Ovary (tissue), 10 donors: ENCODE measurements at regions of chr7 and their contacts with region 1.

Region 1: GRCh38 chr7:26853788-26854393 is 10.5 kb downstream of the SKAP2 start:
- DNase-seq: no peak
- H3K4me3 ChIP-seq: no peak overlapping the region
- H3K27ac ChIP-seq: no peak overlapping the region
- H3K4me1 ChIP-seq: peaks cover 6% of the 10 kb centered on the region
- H3K27me3 ChIP-seq: no peaks in the 10 kb centered on the region
- CTCF ChIP-seq: peak in 2 of 3 donors; percentile 16 to 61
- EP300 ChIP-seq: no peak
- POLR2A ChIP-seq: no peak

Region 2: DNA sequence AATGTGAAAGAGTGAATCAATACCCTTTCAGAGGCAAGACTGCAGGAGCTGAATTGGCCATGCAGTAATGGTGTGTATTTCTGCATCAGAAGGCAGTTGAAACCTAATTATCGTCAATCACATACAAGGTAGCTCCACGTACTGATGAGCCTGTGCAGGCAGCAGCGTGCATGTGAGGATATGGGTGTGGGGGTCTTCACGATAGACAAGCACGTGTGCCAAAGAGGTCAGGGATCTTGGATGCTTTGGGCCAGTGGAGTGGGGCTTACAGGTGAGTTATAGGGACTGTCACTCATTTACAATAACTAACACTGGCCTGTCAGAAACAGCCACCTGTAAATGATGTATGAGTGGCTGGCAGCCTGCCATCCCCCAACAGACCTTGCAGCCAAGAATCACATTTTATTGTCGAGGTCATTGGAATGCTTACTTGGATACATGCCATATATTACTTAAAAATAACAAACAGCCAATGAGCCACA is 200.4 kb before region 1 on chr7:
- intact Hi-C with region 1: no loop called
- DNase-seq: no peak
- H3K4me3 ChIP-seq: no peak overlapping the region
- H3K27ac ChIP-seq: no peak overlapping the region
- H3K4me1 ChIP-seq: no peaks in the 10 kb centered on the region
- H3K27me3 ChIP-seq: no peaks in the 10 kb centered on the region
- CTCF ChIP-seq: no peak
- EP300 ChIP-seq: no peak
- POLR2A ChIP-seq: no peak

Region 3: DNA sequence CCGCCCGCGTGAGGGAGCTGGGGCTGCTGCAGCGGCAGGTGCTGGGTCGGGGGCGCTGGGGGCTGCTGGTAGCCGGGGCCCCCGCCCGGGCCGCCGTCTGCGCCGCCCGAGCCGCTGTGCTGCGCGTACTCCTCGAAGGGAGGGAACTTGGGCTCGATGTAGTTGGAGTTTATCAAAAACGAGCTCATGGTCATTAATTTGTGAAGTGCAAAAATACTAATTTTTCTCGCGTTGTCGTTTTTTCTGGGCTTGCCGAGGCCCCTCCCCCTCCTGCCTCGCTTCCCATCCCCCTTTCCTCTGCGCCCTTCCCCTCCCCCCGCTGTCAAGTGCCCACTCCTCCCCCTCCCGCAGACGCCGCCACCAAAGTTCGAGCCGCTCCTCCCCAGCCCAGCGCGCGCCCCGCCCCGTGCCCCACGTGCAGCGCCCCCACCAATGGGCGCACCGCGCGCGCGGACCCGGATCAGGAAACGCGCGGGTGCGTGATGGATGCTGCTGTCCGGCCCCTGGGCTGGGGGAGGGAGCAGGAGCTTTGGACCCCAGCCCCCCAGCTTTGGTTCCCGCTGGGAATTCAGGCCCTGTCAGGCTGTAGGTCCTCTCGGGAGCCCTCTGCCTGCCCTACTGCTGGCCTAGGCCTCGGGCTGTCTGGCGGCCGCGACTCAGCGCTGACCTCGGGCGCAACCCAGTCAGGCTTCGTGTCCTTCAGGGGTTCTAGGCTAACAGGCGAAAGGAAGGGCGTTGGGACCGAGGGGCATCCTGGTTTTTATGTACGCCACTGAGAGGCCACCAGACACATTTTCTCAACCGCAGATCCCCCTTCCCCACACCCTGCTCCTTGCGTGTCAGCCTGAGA is 276.9 kb after region 1 on chr7 and contains the start of gene HOXA4:
- intact Hi-C with region 1: loop called in 1 of 4 experiments (anchors 5 kb)
- DNase-seq: peak; percentile 80 to 94 (median 88)
- H3K4me3 ChIP-seq: peak within 1 kb of the TSS; percentile 53
- H3K27ac ChIP-seq: peak within 1 kb of the TSS in 1 of 2 donors; percentile 61
- H3K4me1 ChIP-seq: peaks cover 6% of the 10 kb centered on the region
- H3K27me3 ChIP-seq: no peaks in the 10 kb centered on the region
- CTCF ChIP-seq: no peak
- EP300 ChIP-seq: no peak
- POLR2A ChIP-seq: no peak
- total RNA-seq, gene HOXA4: 0.22 to 34.0 (median 2.3) TPM

Region 4: GRCh38 chr7:27143023-27143949 is 289.4 kb after region 1 on chr7 and contains the start of gene HOXA5:
- intact Hi-C with region 1: loop called in 3 of 4 experiments (anchors 5 kb)
- DNase-seq: peak in 2 of 5 donors; percentile 67 to 86
- H3K4me3 ChIP-seq: peak within 1 kb of the TSS; percentile 34
- H3K27ac ChIP-seq: no peak within 1 kb of the TSS
- H3K4me1 ChIP-seq: peaks cover 1% of the 10 kb centered on the region
- H3K27me3 ChIP-seq: no peaks in the 10 kb centered on the region
- CTCF ChIP-seq: peak in 1 of 3 donors; percentile 56
- EP300 ChIP-seq: no peak
- POLR2A ChIP-seq: no peak
- total RNA-seq, gene HOXA5: 0.40 to 29.6 (median 1.4) TPM